ENCODE measurements at regions of chrX and their contacts with region 1.

Region 1: DNA sequence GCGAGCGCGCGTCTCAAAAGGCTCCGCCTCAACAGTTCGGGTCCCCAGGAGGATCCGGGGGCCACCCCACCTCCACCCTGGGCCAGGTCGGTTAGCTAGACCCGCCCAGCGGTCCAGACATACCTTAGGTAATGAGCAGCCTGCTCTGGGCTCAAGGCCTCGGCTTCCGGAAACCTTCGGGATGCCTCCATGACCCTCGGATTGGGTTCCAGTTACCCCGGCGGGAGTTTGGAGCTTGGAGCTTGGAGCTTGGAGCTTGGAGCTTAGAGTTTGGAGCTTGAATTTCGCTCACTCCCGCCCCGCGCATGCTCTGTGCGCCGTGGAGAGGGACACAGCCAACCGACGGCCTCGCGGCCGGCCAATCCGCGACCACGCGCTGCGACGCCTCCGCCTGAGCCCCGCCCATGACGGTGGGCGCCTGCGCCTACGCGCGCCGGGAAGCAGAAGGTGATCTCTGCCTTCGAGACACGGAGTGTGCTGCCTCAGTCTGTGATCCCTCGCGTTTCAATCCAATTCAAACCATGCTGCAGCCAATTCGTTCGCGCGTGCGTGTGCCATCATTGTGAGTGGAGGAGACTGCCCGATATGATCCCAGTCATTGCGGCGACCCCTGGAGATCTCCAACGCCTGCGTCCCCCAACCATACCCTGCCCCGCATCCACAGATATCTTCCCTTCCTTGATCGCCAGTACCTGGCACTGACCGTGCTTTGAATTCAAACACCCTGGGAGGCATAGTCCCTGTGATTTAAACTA is at the start of gene ERCC6L:
- DNase-seq: peak; percentile 62 to 88 (median 77)
- ATAC-seq: peak; percentile 98 to 99 (median 99)
- H3K4me3 ChIP-seq: peak within 1 kb of the TSS; percentile 49 to 50
- H3K4me3 Mint-ChIP-seq: peak within 1 kb of the TSS; percentile 64 to 72 (median 71)
- H3K27ac ChIP-seq: peak within 1 kb of the TSS; percentile 20
- H3K27ac Mint-ChIP-seq: peak within 1 kb of the TSS; percentile 65 to 75
- H3K4me1 ChIP-seq: peaks cover 0 to 6% of the 10 kb centered on the region in 2 experiments
- H3K4me1 Mint-ChIP-seq: peaks cover 0 to 6% (median 6%) of the 10 kb centered on the region in 3 donors
- H3K27me3 ChIP-seq: no peaks in the 10 kb centered on the region
- H3K27me3 Mint-ChIP-seq: no peaks in the 10 kb centered on the region
- total RNA-seq, gene ERCC6L: 0.07 to 1.1 (median 0.30) TPM

Region 2: DNA sequence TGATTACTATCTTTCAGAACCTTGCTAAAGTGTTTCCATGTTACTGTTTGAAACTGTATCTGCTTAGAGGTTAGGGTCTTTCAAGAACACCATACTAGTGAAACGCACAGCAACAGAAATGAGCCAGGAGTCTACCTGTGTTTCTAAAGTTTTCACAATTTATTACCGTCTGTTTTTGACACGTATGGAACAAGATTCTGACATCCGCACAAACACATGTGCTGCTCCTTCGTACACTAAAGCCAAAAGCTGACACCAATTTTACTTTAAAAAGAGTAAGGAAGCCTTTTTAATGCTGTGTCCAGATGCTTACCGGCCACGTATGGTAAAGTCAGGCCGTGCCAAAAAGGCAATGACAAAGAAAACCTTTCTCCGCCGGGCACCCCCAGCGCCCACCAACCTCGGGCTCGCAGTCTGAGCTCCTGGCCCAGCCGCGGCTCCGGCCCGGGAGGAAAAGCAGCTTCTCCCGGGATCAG is 37.6 kb after region 1 on chrX:
- CTCF ChIA-PET with region 1: interaction called in 1 of 2 experiments, 9 read pairs
- POLR2A ChIA-PET with region 1: interaction called, 3 to 12 read pairs
- DNase-seq: peak in 2 of 35 experiments; percentile 4 to 14
- ATAC-seq: peak in 2 of 4 experiments; percentile 7 to 8
- H3K4me3 ChIP-seq: peak overlapping the region; percentile 86 to 92
- H3K4me3 Mint-ChIP-seq: peak overlapping the region; percentile 88 to 89 (median 89)
- H3K27ac ChIP-seq: peak overlapping the region; percentile 87
- H3K27ac Mint-ChIP-seq: peak overlapping the region; percentile 93
- H3K4me1 ChIP-seq: peaks cover 25 to 27% of the 10 kb centered on the region in 2 experiments
- H3K4me1 Mint-ChIP-seq: peaks cover 45 to 49% (median 49%) of the 10 kb centered on the region in 3 donors
- H3K27me3 ChIP-seq: peaks cover 0 to 2% of the 10 kb centered on the region in 2 experiments
- H3K27me3 Mint-ChIP-seq: peaks cover 10 to 15% of the 10 kb centered on the region in 2 donors